ENCODE measurements at regions of chr7 and their contacts with region 1.

Region 1: DNA sequence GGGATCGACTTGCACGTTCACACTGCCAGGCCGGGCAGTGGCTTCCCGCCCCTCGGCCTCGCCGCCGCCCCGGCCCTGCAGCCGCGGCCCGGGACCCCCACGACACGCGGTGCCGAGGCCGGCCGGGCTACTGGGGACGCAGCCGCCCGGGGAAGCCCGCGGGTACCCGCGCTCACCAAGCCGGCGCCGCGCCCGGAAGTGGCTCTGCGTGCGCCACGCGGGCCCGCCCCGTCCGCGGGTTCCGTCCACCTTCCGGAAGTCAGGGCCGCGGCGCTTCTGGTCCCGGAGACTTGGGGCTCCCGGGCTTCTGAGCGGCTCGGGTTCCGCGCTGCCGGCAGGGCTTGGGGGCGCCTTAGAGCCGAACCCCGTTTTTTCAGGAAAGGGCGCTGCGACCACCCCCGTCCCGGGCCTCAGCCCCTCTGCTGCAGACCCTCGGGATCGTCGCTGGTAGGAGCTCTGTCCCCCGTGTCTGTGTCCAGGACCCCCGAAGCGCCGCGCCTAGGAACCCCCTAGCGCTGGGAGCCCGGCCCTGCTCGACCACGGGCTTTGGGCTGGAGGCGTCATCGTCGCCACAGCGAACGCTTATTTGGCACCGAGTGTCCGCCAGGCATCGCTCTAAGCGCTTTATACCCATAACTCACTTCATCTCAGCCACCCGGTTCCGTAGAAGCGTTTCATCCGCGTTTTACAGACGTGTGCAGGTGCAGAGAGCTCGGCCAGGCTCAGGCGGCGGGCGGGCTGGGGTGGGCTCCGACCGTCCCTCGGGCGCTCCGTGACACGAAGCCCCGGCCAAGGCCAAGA is at the start of gene PSMG3:
- DNase-seq: peak; percentile 87 to 88 (median 88)
- H3K4me3 ChIP-seq: peak within 1 kb of the TSS; percentile 59 to 99 (median 80)
- H3K4me3 Mint-ChIP-seq: peak within 1 kb of the TSS; percentile 87 to 94
- H3K27ac ChIP-seq: peak within 1 kb of the TSS; percentile 89 to 90
- H3K27ac Mint-ChIP-seq: peak within 1 kb of the TSS; percentile 83 to 93 (median 90)
- H3K4me1 ChIP-seq: peaks cover 21 to 32% of the 10 kb centered on the region in 2 donors
- H3K4me1 Mint-ChIP-seq: peaks cover 32% of the 10 kb centered on the region
- H3K27me3 ChIP-seq: no peaks in the 10 kb centered on the region
- H3K27me3 Mint-ChIP-seq: peaks cover 2 to 4% (median 3%) of the 10 kb centered on the region in 3 donors
- CTCF ChIP-seq: peak; percentile 32
- polyA plus RNA-seq, gene PSMG3: 32.6 to 38.8 (median 34.5) TPM

Region 2: GRCh38 chr7:1503816-1504775 is 65.9 kb before region 1 on chr7 and contains the start of gene INTS1:
- intact Hi-C with region 1: loop called in 1 of 2 experiments (anchors 5 kb)
- DNase-seq: peak; percentile 90 to 91 (median 91)
- H3K4me3 ChIP-seq: peak within 1 kb of the TSS; percentile 64 to 94 (median 83)
- H3K4me3 Mint-ChIP-seq: peak within 1 kb of the TSS; percentile 94
- H3K27ac ChIP-seq: peak within 1 kb of the TSS in 1 of 2 donors; percentile 80
- H3K27ac Mint-ChIP-seq: peak within 1 kb of the TSS in 6 of 7 donors; percentile 45 to 91 (median 82)
- H3K4me1 ChIP-seq: peaks cover 29 to 43% of the 10 kb centered on the region in 2 donors
- H3K4me1 Mint-ChIP-seq: peaks cover 33% of the 10 kb centered on the region
- H3K27me3 ChIP-seq: no peaks in the 10 kb centered on the region
- H3K27me3 Mint-ChIP-seq: peaks cover 2 to 8% (median 3%) of the 10 kb centered on the region in 3 donors
- CTCF ChIP-seq: peak; percentile 92
- polyA plus RNA-seq, gene INTS1: 5.5 to 64.3 (median 7.3) TPM

Region 3: GRCh38 chr7:1512781-1513656 is 57.0 kb before region 1 on chr7:
- intact Hi-C with region 1: loop called in 1 of 2 experiments (anchors 10 kb)
- DNase-seq: peak; percentile 86 to 90 (median 87)
- H3K4me3 ChIP-seq: peak overlapping the region; percentile 2 to 71 (median 27)
- H3K4me3 Mint-ChIP-seq: peak overlapping the region; percentile 73 to 84
- H3K27ac ChIP-seq: peak overlapping the region; percentile 59 to 75
- H3K27ac Mint-ChIP-seq: peak overlapping the region; percentile 76 to 92 (median 88)
- H3K4me1 ChIP-seq: peaks cover 40 to 44% of the 10 kb centered on the region in 2 donors
- H3K4me1 Mint-ChIP-seq: peaks cover 43% of the 10 kb centered on the region
- H3K27me3 ChIP-seq: no peaks in the 10 kb centered on the region
- H3K27me3 Mint-ChIP-seq: peaks cover 2 to 11% (median 5%) of the 10 kb centered on the region in 3 donors
- CTCF ChIP-seq: no peak